ENCODE measurements at regions of chr9 and their contacts with region 1.

Region 1: DNA sequence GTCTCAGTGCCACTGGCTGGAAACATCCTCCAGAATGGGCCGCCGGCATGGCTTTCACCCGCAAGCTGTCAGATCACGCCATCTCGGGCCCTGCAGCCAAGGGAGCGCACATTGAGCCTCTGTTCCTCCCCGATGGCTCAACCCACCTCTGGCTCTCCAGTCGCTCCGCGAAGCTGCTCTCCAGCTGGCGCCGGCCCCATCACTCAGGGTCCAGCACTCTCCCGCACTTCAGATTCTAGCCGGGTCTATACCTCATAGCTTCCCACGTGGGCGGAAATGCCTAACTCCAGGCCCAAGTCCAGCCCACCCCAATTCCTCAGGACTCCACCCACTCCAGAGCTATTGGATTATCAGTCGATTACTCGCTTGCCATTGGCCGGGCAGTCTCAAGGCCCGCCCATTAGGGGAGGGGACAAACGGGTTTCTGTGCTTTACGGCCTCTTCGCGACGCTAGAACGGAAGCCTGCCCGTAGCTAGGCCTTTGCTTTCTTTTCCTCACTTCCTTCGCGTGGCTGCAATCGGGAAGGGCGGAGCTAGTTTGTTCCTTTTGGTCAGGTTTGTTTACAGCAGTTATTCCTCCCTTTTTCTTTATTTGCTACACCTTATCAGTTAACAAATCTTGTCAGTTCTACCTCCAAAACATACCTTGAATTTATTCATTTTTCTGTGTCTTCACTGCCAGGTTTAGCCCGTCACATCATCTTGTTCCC is at the start of gene NOL6:
- DNase-seq: peak; percentile 100
- H3K4me3 Mint-ChIP-seq: peak within 1 kb of the TSS; percentile 97
- H3K27ac Mint-ChIP-seq: peak within 1 kb of the TSS; percentile 89
- H3K4me1 Mint-ChIP-seq: peaks cover 10% of the 10 kb centered on the region
- H3K27me3 Mint-ChIP-seq: no peaks in the 10 kb centered on the region
- CTCF ChIP-seq: no peak
- total RNA-seq, gene NOL6: 37.2 and 48.6 TPM in 2 replicates

Region 2: DNA sequence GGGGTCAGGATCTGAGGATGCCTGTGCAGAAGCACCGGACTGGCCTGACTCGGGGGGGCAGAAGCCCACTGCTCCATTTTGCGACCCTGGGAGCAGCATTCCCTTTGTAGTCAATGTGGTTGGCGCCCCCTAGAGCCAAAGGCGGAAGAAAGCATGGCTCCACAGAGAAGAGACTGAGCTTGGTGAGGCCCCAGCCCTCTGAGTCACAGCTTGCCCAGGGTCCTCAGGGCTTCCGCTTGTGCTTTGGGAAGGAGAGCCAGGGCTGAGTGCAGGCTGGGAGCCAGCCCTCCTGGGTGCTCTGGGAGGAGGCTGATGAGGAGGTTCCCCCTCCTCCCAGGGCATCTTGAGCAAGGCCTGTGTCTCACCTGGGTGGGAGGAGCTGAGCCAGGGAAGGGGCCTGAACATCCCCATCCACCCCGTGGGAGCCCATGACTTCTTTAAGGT is 20.9 kb before region 1 on chr9:
- CTCF ChIA-PET with region 1: interaction called, 33 read pairs
- POLR2A ChIA-PET with region 1: interaction called, 6 read pairs
- intact Hi-C with region 1: no loop called
- DNase-seq: peak; percentile 96
- H3K4me3 Mint-ChIP-seq: no peak overlapping the region
- H3K27ac Mint-ChIP-seq: no peak overlapping the region
- H3K4me1 Mint-ChIP-seq: peaks cover 13% of the 10 kb centered on the region
- H3K27me3 Mint-ChIP-seq: no peaks in the 10 kb centered on the region
- CTCF ChIP-seq: peak; percentile 66

Region 3: DNA sequence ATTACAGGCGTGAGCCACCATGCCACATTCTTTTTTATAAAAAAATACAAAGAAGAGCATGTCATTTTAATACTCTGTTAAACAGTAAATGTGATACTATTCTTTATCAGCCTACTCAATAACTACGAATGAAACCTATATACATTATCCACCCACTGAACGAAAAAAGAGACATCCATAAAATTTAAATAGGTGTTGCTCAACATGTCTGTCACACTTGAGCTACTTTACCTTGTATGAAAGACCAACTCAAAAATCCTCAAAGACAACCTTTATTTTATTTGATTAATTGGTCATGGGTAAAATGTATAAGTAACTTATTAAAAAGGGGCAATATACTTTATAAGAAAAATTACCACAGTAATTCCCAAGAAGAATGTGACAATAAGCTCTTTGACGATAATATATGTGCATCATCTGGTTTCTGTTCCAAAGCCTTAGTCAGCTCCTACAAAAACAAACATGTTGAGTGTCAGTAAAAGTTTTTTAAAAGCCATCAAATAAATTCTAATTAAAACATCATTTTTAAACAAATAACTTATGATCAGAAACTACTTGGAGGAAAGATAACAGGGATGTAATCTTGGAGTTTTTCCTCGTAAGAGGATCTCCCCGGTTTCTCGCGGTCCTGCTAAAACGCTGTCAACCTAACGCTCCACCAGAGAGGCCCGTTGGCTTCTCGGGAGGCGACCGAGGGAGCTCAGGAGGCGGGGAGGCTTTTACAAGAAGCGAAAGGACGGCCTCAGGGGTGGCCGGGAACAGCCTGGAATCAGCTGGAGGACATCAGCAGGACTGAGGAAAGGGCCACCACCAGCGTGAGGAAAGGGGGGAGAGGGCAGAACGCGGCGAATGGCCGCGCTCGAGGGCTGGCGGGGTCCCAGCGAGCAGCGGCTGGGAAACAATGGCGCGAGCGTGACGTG is 36.7 kb after region 1 on chr9:
- CTCF ChIA-PET with region 1: no interaction called
- POLR2A ChIA-PET with region 1: interaction called, 15 read pairs
- intact Hi-C with region 1: no loop called
- DNase-seq: peak; percentile 46
- H3K4me3 Mint-ChIP-seq: peak overlapping the region; percentile 76
- H3K27ac Mint-ChIP-seq: peak overlapping the region; percentile 98
- H3K4me1 Mint-ChIP-seq: peaks cover 21% of the 10 kb centered on the region
- H3K27me3 Mint-ChIP-seq: no peaks in the 10 kb centered on the region
- CTCF ChIP-seq: no peak

Region 4: GRCh38 chr9:33524306-33524947 is 50.6 kb after region 1 on chr9:
- CTCF ChIA-PET with region 1: interaction called, 6 read pairs
- POLR2A ChIA-PET with region 1: interaction called, 19 read pairs
- intact Hi-C with region 1: loop called (anchors 2 kb)
- DNase-seq: peak; percentile 33
- H3K4me3 Mint-ChIP-seq: peak overlapping the region; percentile 96
- H3K27ac Mint-ChIP-seq: peak overlapping the region; percentile 76
- H3K4me1 Mint-ChIP-seq: no peaks in the 10 kb centered on the region
- H3K27me3 Mint-ChIP-seq: no peaks in the 10 kb centered on the region
- CTCF ChIP-seq: no peak

Region 5: GRCh38 chr9:34437006-34437925 is 963.5 kb after region 1 on chr9:
- CTCF ChIA-PET with region 1: no interaction called
- POLR2A ChIA-PET with region 1: no interaction called
- intact Hi-C with region 1: no loop called
- DNase-seq: peak; percentile 81
- H3K4me3 Mint-ChIP-seq: no peak overlapping the region
- H3K27ac Mint-ChIP-seq: no peak overlapping the region
- H3K4me1 Mint-ChIP-seq: no peaks in the 10 kb centered on the region
- H3K27me3 Mint-ChIP-seq: no peaks in the 10 kb centered on the region
- CTCF ChIP-seq: peak; percentile 74